Naive thymus-derived CD4-positive, alpha-beta T cell (primary cell): ENCODE measurements at regions of chr22 and their contacts with region 1.

Region 1: DNA sequence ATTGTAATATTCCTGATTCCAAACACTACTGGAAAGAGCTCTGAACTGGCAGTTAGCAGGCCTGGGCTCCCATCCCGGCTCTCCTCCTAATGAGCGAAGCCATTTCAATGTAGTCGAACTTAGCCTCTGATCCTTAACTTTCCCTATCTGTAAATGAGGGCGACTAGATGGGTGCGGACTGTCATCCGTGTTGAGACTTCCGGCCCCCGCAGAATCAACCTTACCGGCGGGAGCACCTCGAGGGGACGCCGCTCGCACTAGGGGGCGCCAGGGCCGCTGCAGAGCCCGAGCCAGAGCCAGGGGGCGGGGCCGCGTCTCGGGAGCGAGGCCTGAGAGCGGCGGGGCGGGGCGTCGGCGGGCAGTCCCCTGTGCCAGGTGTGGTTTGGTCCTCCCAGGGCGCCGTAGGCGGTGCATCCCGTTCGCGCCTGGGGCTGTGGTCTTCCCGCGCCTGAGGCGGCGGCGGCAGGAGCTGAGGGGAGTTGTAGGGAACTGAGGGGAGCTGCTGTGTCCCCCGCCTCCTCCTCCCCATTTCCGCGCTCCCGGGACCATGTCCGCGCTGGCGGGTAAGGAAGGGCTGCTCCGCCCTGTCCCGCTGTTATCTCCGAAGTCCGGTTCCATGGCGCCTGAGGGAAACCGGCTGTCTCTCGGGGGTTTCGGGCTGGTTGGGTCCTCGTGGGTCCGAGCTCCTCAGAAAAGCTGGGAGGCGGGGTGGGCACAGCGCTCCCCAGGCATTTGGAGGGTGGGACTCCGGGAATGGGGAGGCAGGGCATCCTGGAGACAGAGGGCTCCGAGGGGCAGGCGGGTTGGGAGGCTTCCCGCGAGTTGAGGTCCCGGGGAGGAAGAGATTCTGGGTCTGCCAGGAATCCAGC is at the start of gene LIMK2:
- DNase-seq: peak; percentile 90 to 99 (median 95)
- ATAC-seq: peak; percentile 100
- H3K4me3 ChIP-seq: peak within 1 kb of the TSS; percentile 83
- H3K4me3 Mint-ChIP-seq: peak within 1 kb of the TSS; percentile 86 to 91 (median 88)
- H3K27ac ChIP-seq: peak within 1 kb of the TSS; percentile 82
- H3K27ac Mint-ChIP-seq: peak within 1 kb of the TSS; percentile 82 to 96 (median 89)
- H3K4me1 ChIP-seq: peaks cover 23 to 31% of the 10 kb centered on the region in 2 donors
- H3K4me1 Mint-ChIP-seq: peaks cover 38 to 72% (median 51%) of the 10 kb centered on the region in 7 donors
- H3K27me3 ChIP-seq: no peaks in the 10 kb centered on the region
- H3K27me3 Mint-ChIP-seq: no peaks in the 10 kb centered on the region
- total RNA-seq, gene LIMK2: 18.3 to 49.9 (median 28.8) TPM

Region 2: DNA sequence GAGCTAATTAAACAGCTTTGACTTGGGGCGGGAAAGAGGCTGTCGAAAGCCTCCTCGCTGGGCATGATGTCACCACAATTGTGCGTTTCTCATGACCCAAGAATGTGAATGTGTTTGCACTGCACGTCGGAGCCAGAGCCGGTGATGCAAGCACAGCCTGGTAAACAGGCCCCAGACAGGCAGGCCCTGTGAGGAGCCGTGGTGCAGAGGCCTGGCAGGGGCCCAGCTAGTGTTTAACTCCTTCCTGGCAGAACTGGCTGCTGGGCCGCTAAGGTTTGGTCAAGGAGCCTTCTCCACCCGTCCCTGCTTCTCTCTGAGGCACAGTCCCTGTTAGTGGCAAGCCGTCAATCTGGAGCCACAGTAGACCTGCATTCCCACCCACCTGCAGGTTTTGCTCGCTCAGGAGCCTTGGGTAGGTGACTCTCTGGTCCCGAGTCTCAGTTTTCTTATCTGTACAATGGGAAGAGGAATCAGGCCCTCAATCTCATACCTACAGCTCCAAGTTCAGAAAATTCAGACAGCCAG is 156.4 kb before region 1 on chr22:
- CTCF ChIA-PET with region 1: no interaction called
- POLR2A ChIA-PET with region 1: no interaction called
- intact Hi-C with region 1: no loop called
- DNase-seq: no peak
- ATAC-seq: no peak
- H3K4me3 ChIP-seq: no peak overlapping the region
- H3K4me3 Mint-ChIP-seq: no peak overlapping the region
- H3K27ac ChIP-seq: no peak overlapping the region
- H3K27ac Mint-ChIP-seq: no peak overlapping the region
- H3K4me1 ChIP-seq: no peaks in the 10 kb centered on the region
- H3K4me1 Mint-ChIP-seq: no peaks in the 10 kb centered on the region
- H3K27me3 ChIP-seq: no peaks in the 10 kb centered on the region
- H3K27me3 Mint-ChIP-seq: no peaks in the 10 kb centered on the region

Region 3: GRCh38 chr22:31160328-31160978 is 51.6 kb before region 1 on chr22:
- CTCF ChIA-PET with region 1: interaction called, 3 read pairs
- POLR2A ChIA-PET with region 1: interaction called, 5 read pairs
- intact Hi-C with region 1: loop called (anchors 2 kb)
- DNase-seq: peak in 3 of 9 donors; percentile 5 to 26 (median 9)
- ATAC-seq: peak; percentile 47
- H3K4me3 ChIP-seq: peak overlapping the region; percentile 76
- H3K4me3 Mint-ChIP-seq: peak overlapping the region; percentile 87 to 100 (median 99)
- H3K27ac ChIP-seq: peak overlapping the region; percentile 74
- H3K27ac Mint-ChIP-seq: peak overlapping the region; percentile 91 to 100 (median 97)
- H3K4me1 ChIP-seq: peaks cover 12 to 17% of the 10 kb centered on the region in 2 donors
- H3K4me1 Mint-ChIP-seq: peaks cover 25 to 42% (median 35%) of the 10 kb centered on the region in 7 donors
- H3K27me3 ChIP-seq: no peaks in the 10 kb centered on the region
- H3K27me3 Mint-ChIP-seq: peaks cover 0 to 13% (median 0%) of the 10 kb centered on the region in 5 donors

Region 4: GRCh38 chr22:31272522-31273446 is 60.7 kb after region 1 on chr22:
- CTCF ChIA-PET with region 1: interaction called, 31 read pairs
- POLR2A ChIA-PET with region 1: interaction called, 18 read pairs
- intact Hi-C with region 1: loop called (anchors 1 kb)
- DNase-seq: peak in 5 of 9 donors; percentile 38 to 58 (median 50)
- ATAC-seq: peak; percentile 81
- H3K4me3 ChIP-seq: no peak overlapping the region
- H3K4me3 Mint-ChIP-seq: peak overlapping the region in 4 of 10 donors; percentile 18 to 50 (median 28)
- H3K27ac ChIP-seq: peak overlapping the region; percentile 51
- H3K27ac Mint-ChIP-seq: peak overlapping the region; percentile 46 to 95 (median 86)
- H3K4me1 ChIP-seq: peaks cover 2 to 63% of the 10 kb centered on the region in 2 donors
- H3K4me1 Mint-ChIP-seq: peaks cover 25 to 91% (median 77%) of the 10 kb centered on the region in 7 donors
- H3K27me3 ChIP-seq: no peaks in the 10 kb centered on the region
- H3K27me3 Mint-ChIP-seq: no peaks in the 10 kb centered on the region

Region 5: DNA sequence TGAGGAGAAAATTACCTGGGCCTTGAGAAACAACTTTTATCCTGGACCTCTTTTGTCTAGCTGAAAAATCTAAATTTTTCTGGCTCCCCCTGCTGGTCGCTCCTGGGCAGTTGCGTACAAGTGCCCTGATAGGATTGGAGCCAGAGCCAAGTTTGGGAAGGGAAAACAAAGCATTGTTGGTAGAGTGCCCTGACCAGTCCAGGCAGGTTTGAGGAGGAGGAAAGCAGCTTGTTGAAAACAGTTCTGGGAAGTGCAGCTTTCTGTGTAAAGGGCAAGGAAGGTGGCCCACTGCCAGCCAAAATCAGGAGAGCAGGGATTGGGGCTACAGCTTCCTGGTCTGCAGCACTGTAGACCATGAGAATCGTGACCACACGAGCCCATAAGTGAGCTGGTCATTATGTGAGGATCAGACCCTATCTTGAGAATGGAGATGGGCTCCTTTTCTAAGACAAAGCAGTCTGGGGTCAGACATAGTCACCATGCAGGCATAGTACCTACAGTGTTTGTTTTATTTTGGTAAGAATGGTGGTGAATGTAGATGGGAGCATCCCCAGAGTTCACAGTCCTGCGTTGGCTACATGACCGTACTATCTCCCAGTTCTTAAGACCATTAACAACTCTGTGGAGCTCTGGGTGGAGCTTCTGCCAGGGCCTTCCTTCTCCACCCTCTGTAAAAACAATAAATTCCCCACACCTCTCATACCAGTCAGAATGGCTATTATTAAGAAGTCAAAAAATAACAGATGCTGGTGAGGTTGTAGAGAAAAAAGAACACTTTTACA is 101.5 kb after region 1 on chr22:
- CTCF ChIA-PET with region 1: interaction called, 16 read pairs
- POLR2A ChIA-PET with region 1: interaction called, 4 read pairs
- intact Hi-C with region 1: loop called in 1 of 2 experiments (anchors 1 kb)
- DNase-seq: peak; percentile 40 to 71 (median 62)
- ATAC-seq: peak; percentile 76
- H3K4me3 ChIP-seq: no peak overlapping the region
- H3K4me3 Mint-ChIP-seq: peak overlapping the region in 3 of 10 donors; percentile 2 to 10 (median 9)
- H3K27ac ChIP-seq: peak overlapping the region; percentile 32
- H3K27ac Mint-ChIP-seq: peak overlapping the region; percentile 16 to 84 (median 45)
- H3K4me1 ChIP-seq: peaks cover 2 to 10% of the 10 kb centered on the region in 2 donors
- H3K4me1 Mint-ChIP-seq: peaks cover 9 to 33% (median 26%) of the 10 kb centered on the region in 7 donors
- H3K27me3 ChIP-seq: no peaks in the 10 kb centered on the region
- H3K27me3 Mint-ChIP-seq: no peaks in the 10 kb centered on the region